Breast epithelium (tissue), 4 donors: ENCODE measurements at regions of chr10 and their contacts with region 1.

Region 1: DNA sequence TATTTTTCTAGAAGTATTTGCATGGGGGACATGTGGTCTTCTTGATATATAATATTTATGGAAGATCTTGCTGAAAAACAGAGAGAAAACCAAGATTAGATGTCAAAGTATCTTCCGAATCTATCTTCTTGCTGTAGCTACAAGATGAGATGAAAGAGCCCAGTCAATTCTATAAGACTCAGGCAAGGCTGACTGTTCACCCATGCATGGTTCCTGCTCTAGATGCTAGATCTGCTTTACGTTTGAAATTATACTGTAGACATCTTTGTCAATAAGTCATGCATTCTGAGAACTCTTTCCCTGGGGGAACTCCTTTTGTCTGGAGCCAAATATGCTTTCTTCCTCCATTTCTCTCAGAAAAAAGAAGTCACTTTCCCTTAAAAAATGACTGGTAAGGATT is 1292.0 kb downstream of the XPNPEP1 start:
- DNase-seq: no peak
- H3K4me3 ChIP-seq: no peak overlapping the region
- H3K27ac ChIP-seq: no peak overlapping the region
- H3K4me1 ChIP-seq: no peaks in the 10 kb centered on the region
- H3K27me3 ChIP-seq: no peaks in the 10 kb centered on the region
- CTCF ChIP-seq: no peak
- POLR2A ChIP-seq: no peak

Region 2: DNA sequence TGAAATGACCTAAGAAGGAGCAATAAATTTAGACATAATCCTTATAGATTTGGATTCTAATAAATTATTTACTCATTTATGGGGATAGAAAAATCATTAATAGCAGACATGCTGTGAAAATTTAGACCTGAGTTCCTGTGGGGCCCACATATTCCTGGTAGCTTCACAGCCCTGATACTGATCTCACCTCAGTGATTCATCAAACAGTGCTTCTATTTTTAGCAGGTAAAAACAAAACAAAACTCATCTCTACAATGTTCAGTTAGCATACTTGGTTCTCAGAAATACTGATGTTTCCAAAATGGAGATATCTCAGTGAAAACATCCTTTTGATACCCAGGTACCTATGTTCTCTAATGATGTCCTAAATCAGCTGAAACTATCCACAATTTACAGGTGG is 625.7 kb before region 1 on chr10:
- intact Hi-C with region 1: loop called (anchors 5 kb)
- DNase-seq: no peak
- H3K4me3 ChIP-seq: no peak overlapping the region
- H3K27ac ChIP-seq: no peak overlapping the region
- H3K4me1 ChIP-seq: no peaks in the 10 kb centered on the region
- H3K27me3 ChIP-seq: no peaks in the 10 kb centered on the region
- CTCF ChIP-seq: no peak
- POLR2A ChIP-seq: no peak